PC-9 (cell line): ENCODE measurements at regions of chr12 and their contacts with region 1.

Region 1: DNA sequence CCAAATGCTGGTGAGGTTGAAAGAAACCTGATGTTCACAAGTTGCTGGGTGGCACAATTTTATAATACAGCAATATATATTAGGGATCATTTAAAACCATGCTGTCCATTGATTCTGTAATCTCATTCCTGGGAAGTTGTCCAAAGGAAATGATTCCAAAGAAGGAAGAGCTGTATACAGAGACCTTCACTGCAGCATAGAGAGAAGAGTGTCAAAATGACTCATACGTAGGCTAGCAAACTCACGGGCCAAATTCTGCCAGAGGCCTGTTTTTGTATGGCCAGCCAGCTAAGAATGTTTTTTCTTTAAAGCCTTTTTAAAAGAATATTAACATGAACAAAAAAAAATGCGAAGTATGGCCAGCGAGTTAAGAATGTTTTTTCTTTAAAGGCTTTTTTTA is 69.2 kb upstream of the MED13L start:
- DNase-seq: peak; percentile 23 to 43
- H3K4me3 ChIP-seq: no peak overlapping the region
- H3K27ac ChIP-seq: no peak overlapping the region
- H3K4me1 ChIP-seq: peaks cover 13% of the 10 kb centered on the region; the same call in 1 of the 2 replicates
- H3K27me3 ChIP-seq: no peaks in the 10 kb centered on the region
- CTCF ChIP-seq: no peak

Region 2: DNA sequence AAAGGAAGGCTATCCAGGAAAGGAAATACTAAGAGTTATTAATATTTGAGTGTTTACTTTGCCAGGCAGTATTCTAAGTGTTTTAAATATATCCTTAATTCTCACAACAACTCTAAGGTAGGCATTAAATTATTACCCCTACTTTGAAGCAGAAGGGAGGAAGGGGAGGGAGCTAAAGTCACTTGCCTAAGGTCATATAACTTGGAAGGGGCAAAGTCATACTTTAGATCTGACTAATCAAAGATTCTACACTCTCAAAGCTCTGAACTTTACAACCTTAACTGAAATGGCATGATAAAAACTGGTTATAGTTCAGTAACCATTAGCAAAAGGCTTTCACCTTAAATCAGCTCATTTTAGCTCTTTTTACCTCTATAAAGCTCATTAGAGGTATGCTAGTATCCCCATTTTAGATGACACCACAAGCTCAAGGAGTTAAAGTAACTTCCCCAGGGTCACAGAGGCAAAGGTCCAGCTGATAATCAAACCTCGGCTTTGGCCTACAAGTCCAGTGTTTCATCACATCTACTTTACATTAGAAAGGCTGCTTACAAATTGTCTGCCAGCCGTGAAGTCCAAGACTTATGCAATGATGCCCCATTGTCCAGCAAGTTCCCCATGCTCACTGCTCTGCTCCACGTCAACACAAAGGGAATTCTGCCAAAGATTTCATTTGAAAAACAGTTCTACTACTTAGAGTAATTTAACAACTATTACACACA is 293.1 kb before region 1 on chr12:
- CTCF ChIA-PET with region 1: no interaction called
- POLR2A ChIA-PET with region 1: no interaction called
- intact Hi-C with region 1: no loop called
- DNase-seq: peak in 1 of 2 experiments; percentile 53
- H3K4me3 ChIP-seq: no peak overlapping the region
- H3K27ac ChIP-seq: peak overlapping the region; percentile 42
- H3K4me1 ChIP-seq: peaks cover 19% of the 10 kb centered on the region
- H3K27me3 ChIP-seq: no peaks in the 10 kb centered on the region
- CTCF ChIP-seq: no peak

Region 3: DNA sequence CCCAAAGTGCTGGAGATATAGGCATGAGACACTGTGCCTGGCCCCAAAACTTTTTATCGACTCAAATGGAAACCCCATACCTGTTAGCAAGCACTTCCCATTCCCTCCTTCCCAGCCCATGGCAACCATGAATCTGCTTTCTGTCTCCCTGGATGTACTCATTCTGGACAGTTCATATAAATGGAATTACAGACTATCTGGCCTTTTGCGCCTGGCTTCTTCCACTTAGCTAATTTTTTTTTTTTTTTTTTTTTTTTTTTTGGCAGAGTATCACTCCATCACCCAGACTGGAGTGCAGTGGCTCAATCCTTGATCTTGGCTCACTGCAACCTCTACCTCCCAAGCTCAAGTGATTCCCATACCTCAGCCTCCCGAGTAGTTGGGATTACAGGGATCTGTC is 65.2 kb after region 1 on chr12:
- CTCF ChIA-PET with region 1: no interaction called
- POLR2A ChIA-PET with region 1: no interaction called
- intact Hi-C with region 1: no loop called
- DNase-seq: no peak
- H3K4me3 ChIP-seq: no peak overlapping the region
- H3K27ac ChIP-seq: no peak overlapping the region
- H3K4me1 ChIP-seq: peaks cover 6% of the 10 kb centered on the region
- H3K27me3 ChIP-seq: no peaks in the 10 kb centered on the region
- CTCF ChIP-seq: no peak

Region 4: DNA sequence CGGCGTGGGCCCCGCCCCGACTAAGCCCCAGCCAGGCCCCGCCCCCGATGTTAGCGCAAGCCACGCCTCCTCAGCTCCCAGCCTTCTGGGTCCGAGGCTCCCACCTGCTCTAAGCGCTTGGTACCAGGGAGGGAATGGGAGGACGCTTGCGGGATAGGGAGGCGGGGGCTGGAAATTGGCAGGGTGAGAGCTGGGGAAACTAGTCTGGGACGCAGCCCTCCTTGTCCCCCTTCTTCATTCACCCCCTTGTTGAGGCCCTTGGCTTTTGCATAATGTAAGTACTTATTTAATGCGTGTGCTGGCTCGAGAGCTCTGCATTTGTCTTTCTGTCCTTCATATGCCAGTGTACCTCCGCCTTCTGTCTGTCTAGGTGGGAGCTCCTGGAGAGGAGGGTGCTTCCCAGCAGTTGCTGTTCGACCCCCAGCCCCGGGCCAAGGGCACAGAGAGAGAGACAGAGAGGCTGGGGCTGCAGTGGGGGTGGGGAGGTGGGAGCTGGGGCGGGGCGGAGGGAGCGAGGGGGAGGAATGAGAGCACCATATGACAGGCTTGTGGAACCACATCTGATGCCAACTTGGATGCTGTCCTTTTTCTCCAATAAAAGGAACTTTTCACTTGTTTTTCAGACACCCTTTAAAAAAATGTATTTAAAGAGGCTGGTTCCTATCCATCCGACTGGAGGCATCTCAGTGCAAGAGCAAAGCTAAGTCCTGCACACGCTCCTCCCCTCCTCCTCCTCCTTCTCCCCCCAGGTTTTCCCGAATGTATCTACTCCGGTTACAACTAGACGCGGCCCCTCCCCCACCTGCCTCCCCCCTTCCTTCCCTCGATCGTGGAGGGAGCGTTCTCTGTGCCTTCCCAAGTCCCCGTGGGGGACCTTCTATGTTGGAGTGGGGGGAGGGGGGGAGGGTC is 186.9 kb after region 1 on chr12:
- CTCF ChIA-PET with region 1: no interaction called
- POLR2A ChIA-PET with region 1: no interaction called
- intact Hi-C with region 1: no loop called
- DNase-seq: peak; percentile 51 to 76
- H3K4me3 ChIP-seq: peak overlapping the region; percentile 57
- H3K27ac ChIP-seq: no peak overlapping the region
- H3K4me1 ChIP-seq: peaks cover 18% of the 10 kb centered on the region
- H3K27me3 ChIP-seq: no peaks in the 10 kb centered on the region
- CTCF ChIP-seq: no peak

Region 5: GRCh38 chr12:116642683-116643082 is 295.9 kb after region 1 on chr12:
- CTCF ChIA-PET with region 1: no interaction called
- POLR2A ChIA-PET with region 1: interaction called, 10 read pairs
- intact Hi-C with region 1: no loop called
- DNase-seq: no peak
- H3K4me3 ChIP-seq: no peak overlapping the region
- H3K27ac ChIP-seq: no peak overlapping the region
- H3K4me1 ChIP-seq: no peaks in the 10 kb centered on the region
- H3K27me3 ChIP-seq: peaks cover 13% of the 10 kb centered on the region; the same call in 1 of the 2 replicates
- CTCF ChIP-seq: no peak